Activated CD4-positive, alpha-beta T cell treated with anti-CD3 and anti-CD28 coated beads, Interleukin-2, amount 10 ng/mL, durations not matched to agents 24 days and 14 days (primary cell): ENCODE measurements at regions of chr2 and their contacts with region 1.

Region 1: DNA sequence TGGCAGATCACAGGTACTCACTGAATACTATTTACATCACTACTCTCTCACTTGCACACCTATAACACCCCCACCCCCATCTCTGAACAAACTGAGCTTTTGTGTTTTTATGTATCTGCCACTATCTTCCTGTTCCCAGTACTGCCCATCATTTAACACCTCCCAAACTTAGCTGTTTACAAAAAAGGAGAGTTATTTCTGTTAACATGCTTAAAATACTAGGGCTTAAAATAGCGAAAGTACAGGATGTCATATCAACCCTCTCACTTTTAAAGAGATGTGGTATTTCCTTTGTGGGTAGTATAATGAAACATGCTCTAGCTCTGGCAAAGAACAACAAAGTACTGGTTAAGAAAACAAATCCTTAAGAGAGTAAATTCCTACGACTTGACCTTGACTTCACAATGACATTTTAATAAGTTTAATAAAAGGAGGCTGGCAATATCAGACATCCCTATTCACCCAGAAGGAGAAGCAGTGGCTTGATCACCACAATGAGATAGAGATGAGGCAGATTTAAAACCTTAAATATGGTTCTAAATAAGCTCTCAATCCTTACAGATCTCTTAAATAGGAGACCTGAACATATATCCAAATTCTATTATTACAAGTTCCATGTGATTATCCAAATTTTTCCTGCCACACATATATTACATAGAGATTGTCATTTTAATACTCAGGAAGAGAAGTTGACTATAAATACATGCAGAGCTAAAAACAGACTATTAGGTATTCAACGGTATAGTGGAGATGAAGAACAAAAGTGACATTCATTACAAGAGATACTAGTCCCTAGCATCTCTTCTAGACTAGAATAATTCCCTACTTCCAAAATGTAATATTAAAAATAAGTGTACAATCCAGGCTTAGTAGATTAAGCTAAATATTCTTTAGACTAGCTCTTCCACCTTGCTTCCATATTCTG is 36.9 kb downstream of the TRAK2 start:
- DNase-seq: peak; percentile 64
- H3K4me3 Mint-ChIP-seq: no peak overlapping the region
- H3K27ac Mint-ChIP-seq: no peak overlapping the region
- H3K4me1 Mint-ChIP-seq: peaks cover 5% of the 10 kb centered on the region
- H3K27me3 Mint-ChIP-seq: no peaks in the 10 kb centered on the region

Region 2: GRCh38 chr2:201208563-201209252 is 205.7 kb before region 1 on chr2:
- intact Hi-C with region 1: no loop called
- DNase-seq: no peak
- H3K4me3 Mint-ChIP-seq: no peak overlapping the region
- H3K27ac Mint-ChIP-seq: no peak overlapping the region
- H3K4me1 Mint-ChIP-seq: peaks cover 21% of the 10 kb centered on the region
- H3K27me3 Mint-ChIP-seq: no peaks in the 10 kb centered on the region

Region 3: GRCh38 chr2:201432038-201432620 is 17.8 kb after region 1 on chr2:
- intact Hi-C with region 1: loop called (anchors 2 kb)
- DNase-seq: peak; percentile 62
- H3K4me3 Mint-ChIP-seq: peak overlapping the region; percentile 77
- H3K27ac Mint-ChIP-seq: peak overlapping the region; percentile 95
- H3K4me1 Mint-ChIP-seq: peaks cover 28% of the 10 kb centered on the region
- H3K27me3 Mint-ChIP-seq: no peaks in the 10 kb centered on the region

Region 4: GRCh38 chr2:201546576-201546975 is 132.2 kb after region 1 on chr2:
- intact Hi-C with region 1: loop called (anchors 5 kb)
- DNase-seq: no peak
- H3K4me3 Mint-ChIP-seq: no peak overlapping the region
- H3K27ac Mint-ChIP-seq: no peak overlapping the region
- H3K4me1 Mint-ChIP-seq: no peaks in the 10 kb centered on the region
- H3K27me3 Mint-ChIP-seq: peaks cover 2% of the 10 kb centered on the region